Aorta (tissue), 5 donors: ENCODE measurements at regions of chrX and their contacts with region 1.

Region 1: DNA sequence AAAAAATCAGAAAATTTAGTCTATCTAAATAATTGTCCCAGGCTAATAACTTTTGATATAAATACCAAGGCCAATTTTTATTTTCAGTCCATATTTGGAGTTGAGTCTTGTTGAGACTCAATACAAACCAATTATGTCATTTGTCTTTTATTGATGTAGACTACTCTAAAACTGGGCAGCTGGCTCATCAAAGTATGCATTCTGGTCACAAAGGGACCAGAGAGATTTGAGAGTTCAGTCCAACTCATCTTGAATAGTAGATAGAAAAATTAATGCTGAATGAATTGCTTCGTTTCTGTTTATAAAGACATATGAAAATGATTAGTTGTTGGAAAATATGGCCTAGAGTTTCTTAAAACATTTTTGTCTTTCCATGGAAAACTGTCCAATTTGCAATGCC is 412.5 kb upstream of the KLHL4 start:
- DNase-seq: no peak
- ATAC-seq: no peak
- H3K4me3 ChIP-seq: no peak overlapping the region
- H3K27ac ChIP-seq: no peak overlapping the region
- H3K4me1 ChIP-seq: no peaks in the 10 kb centered on the region
- H3K27me3 ChIP-seq: no peaks in the 10 kb centered on the region

Region 2: GRCh38 chrX:86504297-86504696 is 600.8 kb before region 1 on chrX:
- intact Hi-C with region 1: no loop called
- DNase-seq: no peak
- ATAC-seq: no peak
- H3K4me3 ChIP-seq: no peak overlapping the region
- H3K27ac ChIP-seq: no peak overlapping the region
- H3K4me1 ChIP-seq: no peaks in the 10 kb centered on the region
- H3K27me3 ChIP-seq: no peaks in the 10 kb centered on the region

Region 3: GRCh38 chrX:87078231-87078630 is 26.9 kb before region 1 on chrX:
- intact Hi-C with region 1: loop called in 1 of 2 experiments (anchors 2 kb)
- DNase-seq: no peak
- ATAC-seq: no peak
- H3K4me3 ChIP-seq: no peak overlapping the region
- H3K27ac ChIP-seq: no peak overlapping the region
- H3K4me1 ChIP-seq: no peaks in the 10 kb centered on the region
- H3K27me3 ChIP-seq: no peaks in the 10 kb centered on the region

Region 4: GRCh38 chrX:87167841-87168240 is 62.7 kb after region 1 on chrX:
- intact Hi-C with region 1: no loop called
- DNase-seq: no peak
- ATAC-seq: no peak
- H3K4me3 ChIP-seq: no peak overlapping the region
- H3K27ac ChIP-seq: no peak overlapping the region
- H3K4me1 ChIP-seq: no peaks in the 10 kb centered on the region
- H3K27me3 ChIP-seq: no peaks in the 10 kb centered on the region